CD8-positive, alpha-beta T cell (primary cell): ENCODE measurements at regions of chr9 and their contacts with region 1.

Region 1: GRCh38 chr9:112717661-112718341 is at the start of gene INIP:
- DNase-seq: peak; percentile 94 to 99 (median 97)
- ATAC-seq: peak; percentile 90
- H3K4me3 ChIP-seq: peak within 1 kb of the TSS; percentile 83 to 97
- H3K4me3 Mint-ChIP-seq: peak within 1 kb of the TSS; percentile 94
- H3K27ac ChIP-seq: peak within 1 kb of the TSS; percentile 95 to 96
- H3K27ac Mint-ChIP-seq: peak within 1 kb of the TSS; percentile 98
- H3K4me1 ChIP-seq: peaks cover 15% of the 10 kb centered on the region
- H3K4me1 Mint-ChIP-seq: peaks cover 30% of the 10 kb centered on the region
- H3K27me3 ChIP-seq: no peaks in the 10 kb centered on the region
- H3K27me3 Mint-ChIP-seq: no peaks in the 10 kb centered on the region
- CTCF ChIP-seq: no peak
- total RNA-seq, gene INIP: 11.7 to 17.2 TPM

Region 2: GRCh38 chr9:111483862-111484571 is 1233.8 kb before region 1 on chr9 and contains the start of gene ECPAS:
- CTCF ChIA-PET with region 1: no interaction called
- POLR2A ChIA-PET with region 1: no interaction called
- intact Hi-C with region 1: loop called (anchors 2 to 5 kb)
- DNase-seq: peak; percentile 35 to 79 (median 63)
- ATAC-seq: peak; percentile 64
- H3K4me3 ChIP-seq: peak within 1 kb of the TSS; percentile 90 to 99
- H3K4me3 Mint-ChIP-seq: peak within 1 kb of the TSS; percentile 86
- H3K27ac ChIP-seq: peak within 1 kb of the TSS; percentile 81 to 85
- H3K27ac Mint-ChIP-seq: peak within 1 kb of the TSS; percentile 81
- H3K4me1 ChIP-seq: peaks cover 7% of the 10 kb centered on the region
- H3K4me1 Mint-ChIP-seq: peaks cover 29% of the 10 kb centered on the region
- H3K27me3 ChIP-seq: no peaks in the 10 kb centered on the region
- H3K27me3 Mint-ChIP-seq: no peaks in the 10 kb centered on the region
- CTCF ChIP-seq: no peak
- total RNA-seq, gene ECPAS: 36.4 to 44.6 TPM

Region 3: GRCh38 chr9:112097712-112098688 is 619.8 kb before region 1 on chr9:
- CTCF ChIA-PET with region 1: no interaction called
- POLR2A ChIA-PET with region 1: no interaction called
- intact Hi-C with region 1: loop called (anchors 5 to 10 kb)
- DNase-seq: peak; percentile 41 to 84 (median 65)
- ATAC-seq: peak; percentile 78
- H3K4me3 ChIP-seq: no peak overlapping the region
- H3K4me3 Mint-ChIP-seq: no peak overlapping the region
- H3K27ac ChIP-seq: no peak overlapping the region
- H3K27ac Mint-ChIP-seq: no peak overlapping the region
- H3K4me1 ChIP-seq: peaks cover 4% of the 10 kb centered on the region
- H3K4me1 Mint-ChIP-seq: peaks cover 20% of the 10 kb centered on the region
- H3K27me3 ChIP-seq: no peaks in the 10 kb centered on the region
- H3K27me3 Mint-ChIP-seq: no peaks in the 10 kb centered on the region
- CTCF ChIP-seq: peak; percentile 89

Region 4: DNA sequence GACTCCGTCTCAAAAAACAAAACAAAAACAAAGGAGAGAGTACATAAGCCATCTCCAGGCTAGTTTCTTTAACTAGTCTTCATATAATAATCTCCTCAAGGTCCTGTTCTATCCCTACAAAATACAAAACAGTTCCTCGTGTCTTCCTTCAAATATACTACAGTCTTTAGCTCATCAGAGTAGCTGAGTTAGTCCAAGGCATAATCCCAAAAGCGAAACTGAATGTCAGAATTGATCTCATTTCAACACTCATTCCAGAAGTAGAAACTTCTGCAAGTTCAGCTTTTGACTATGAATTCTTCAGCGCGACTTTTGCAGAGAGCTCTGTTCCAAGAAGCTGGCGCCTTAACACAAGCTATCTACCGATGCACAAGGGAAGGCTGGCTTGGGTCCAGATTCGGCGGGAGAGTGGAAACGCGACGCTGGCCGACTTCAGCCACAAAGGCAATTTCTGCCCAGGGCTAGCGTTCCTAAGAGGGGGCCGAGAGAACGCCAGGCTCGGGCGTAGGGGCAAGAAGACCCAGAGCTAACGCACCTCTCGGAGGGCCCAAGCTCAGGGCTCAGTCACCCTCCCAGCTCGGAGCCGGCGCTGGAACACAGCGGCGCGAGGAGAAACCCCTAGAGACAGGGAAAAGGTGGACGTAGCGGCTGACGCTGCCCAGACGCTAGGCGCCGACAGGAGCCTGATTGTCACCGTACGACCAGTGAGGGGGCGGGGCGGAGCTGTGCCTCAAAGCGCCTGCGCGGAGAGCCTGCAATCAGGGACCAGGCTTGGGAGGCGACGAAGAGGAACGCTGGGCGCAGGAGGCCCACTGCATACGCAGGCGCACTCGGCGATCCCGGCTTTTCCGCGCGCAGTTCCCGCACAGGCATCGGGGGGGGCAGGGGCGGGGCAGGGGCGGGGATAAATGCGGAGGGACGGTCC is 338.4 kb before region 1 on chr9:
- CTCF ChIA-PET with region 1: interaction called, 9 read pairs
- POLR2A ChIA-PET with region 1: interaction called, 4 read pairs
- intact Hi-C with region 1: loop called (anchors 1 to 5 kb)
- DNase-seq: peak; percentile 93 to 99 (median 97)
- ATAC-seq: peak; percentile 95
- H3K4me3 ChIP-seq: peak overlapping the region; percentile 81 to 96
- H3K4me3 Mint-ChIP-seq: peak overlapping the region; percentile 99
- H3K27ac ChIP-seq: peak overlapping the region; percentile 77 to 92
- H3K27ac Mint-ChIP-seq: peak overlapping the region; percentile 96
- H3K4me1 ChIP-seq: peaks cover 27% of the 10 kb centered on the region
- H3K4me1 Mint-ChIP-seq: peaks cover 54% of the 10 kb centered on the region
- H3K27me3 ChIP-seq: no peaks in the 10 kb centered on the region
- H3K27me3 Mint-ChIP-seq: no peaks in the 10 kb centered on the region
- CTCF ChIP-seq: no peak

Region 5: DNA sequence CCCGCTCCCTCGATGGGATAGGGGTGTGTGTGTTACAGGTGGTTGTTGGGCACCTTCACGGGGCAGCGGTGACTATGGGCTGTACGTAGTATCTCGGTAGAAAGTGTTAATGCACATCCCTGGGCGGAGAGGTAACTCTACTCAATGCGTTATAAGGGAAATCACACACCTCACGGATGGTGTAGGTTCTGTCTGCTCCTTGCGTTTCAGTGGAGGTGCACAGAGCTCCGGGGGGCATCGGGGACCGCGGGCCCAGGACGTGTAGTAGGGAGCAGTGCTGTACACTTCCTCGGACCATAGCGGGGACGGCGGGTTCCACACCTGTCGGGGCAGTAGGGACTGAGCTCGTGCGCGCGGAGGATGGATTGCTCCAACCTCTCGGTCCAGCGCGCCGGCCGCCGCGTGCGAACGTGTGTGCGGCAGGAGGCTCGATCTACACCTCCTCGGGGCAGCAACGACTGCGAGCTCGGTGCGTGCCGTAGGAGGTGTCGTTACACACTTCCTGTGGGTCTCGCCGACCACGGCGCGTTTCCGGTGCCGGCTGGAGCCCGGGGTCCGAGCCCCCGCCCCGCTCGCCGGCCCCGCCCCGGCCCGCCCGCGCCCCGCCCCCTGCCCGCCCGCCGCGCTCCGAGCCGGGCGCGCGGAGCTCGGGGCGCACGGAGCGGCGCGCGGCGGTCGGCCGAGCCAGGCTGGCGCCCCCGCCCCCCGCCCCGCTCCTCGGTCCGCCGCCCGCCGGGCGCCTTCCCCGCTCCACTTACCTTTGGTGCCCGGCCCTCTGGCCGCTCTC is 231.4 kb before region 1 on chr9 and contains the start of gene KIAA1958:
- CTCF ChIA-PET with region 1: no interaction called
- POLR2A ChIA-PET with region 1: interaction called, 9 read pairs
- intact Hi-C with region 1: loop called (anchors 1 to 2 kb)
- DNase-seq: peak; percentile 50 to 91 (median 81)
- ATAC-seq: peak; percentile 74
- H3K4me3 ChIP-seq: peak within 1 kb of the TSS; percentile 77 to 81
- H3K4me3 Mint-ChIP-seq: peak within 1 kb of the TSS; percentile 97
- H3K27ac ChIP-seq: peak within 1 kb of the TSS; percentile 77 to 78
- H3K27ac Mint-ChIP-seq: peak within 1 kb of the TSS; percentile 94
- H3K4me1 ChIP-seq: peaks cover 12% of the 10 kb centered on the region
- H3K4me1 Mint-ChIP-seq: peaks cover 42% of the 10 kb centered on the region
- H3K27me3 ChIP-seq: no peaks in the 10 kb centered on the region
- H3K27me3 Mint-ChIP-seq: no peaks in the 10 kb centered on the region
- CTCF ChIP-seq: no peak
- total RNA-seq, gene KIAA1958: 7.2 to 7.5 TPM

Region 6: DNA sequence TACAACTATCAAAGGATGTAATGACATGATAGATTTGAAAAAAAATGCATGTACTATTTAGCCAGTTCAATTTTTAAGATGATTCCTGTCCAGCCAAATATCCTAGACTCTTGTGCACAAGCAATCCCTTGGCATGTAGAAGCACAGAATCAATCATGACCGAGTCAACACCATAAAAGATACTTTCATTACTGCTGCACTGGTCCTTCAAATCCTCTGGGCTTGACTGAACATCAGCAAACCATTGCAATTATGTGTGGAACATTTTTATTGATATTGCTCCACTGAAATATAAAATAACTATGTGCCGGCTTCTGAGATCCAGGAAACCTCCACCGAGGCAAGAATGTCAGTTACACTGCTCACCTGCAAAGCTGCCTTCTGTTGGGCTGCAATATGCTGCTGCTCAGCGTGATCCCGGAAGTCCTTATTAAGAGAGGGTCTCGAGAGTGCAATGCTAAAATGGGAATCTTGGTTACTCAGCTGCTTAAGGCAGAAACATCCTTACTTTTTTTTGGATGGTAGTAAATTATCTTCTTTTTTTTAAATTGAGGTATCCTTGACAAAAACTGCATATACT is 28.6 kb before region 1 on chr9:
- CTCF ChIA-PET with region 1: no interaction called
- POLR2A ChIA-PET with region 1: no interaction called
- intact Hi-C with region 1: no loop called
- DNase-seq: no peak
- ATAC-seq: no peak
- H3K4me3 ChIP-seq: no peak overlapping the region
- H3K4me3 Mint-ChIP-seq: no peak overlapping the region
- H3K27ac ChIP-seq: no peak overlapping the region
- H3K27ac Mint-ChIP-seq: no peak overlapping the region
- H3K4me1 ChIP-seq: no peaks in the 10 kb centered on the region
- H3K4me1 Mint-ChIP-seq: no peaks in the 10 kb centered on the region
- H3K27me3 ChIP-seq: no peaks in the 10 kb centered on the region
- H3K27me3 Mint-ChIP-seq: no peaks in the 10 kb centered on the region
- CTCF ChIP-seq: no peak

Region 7: DNA sequence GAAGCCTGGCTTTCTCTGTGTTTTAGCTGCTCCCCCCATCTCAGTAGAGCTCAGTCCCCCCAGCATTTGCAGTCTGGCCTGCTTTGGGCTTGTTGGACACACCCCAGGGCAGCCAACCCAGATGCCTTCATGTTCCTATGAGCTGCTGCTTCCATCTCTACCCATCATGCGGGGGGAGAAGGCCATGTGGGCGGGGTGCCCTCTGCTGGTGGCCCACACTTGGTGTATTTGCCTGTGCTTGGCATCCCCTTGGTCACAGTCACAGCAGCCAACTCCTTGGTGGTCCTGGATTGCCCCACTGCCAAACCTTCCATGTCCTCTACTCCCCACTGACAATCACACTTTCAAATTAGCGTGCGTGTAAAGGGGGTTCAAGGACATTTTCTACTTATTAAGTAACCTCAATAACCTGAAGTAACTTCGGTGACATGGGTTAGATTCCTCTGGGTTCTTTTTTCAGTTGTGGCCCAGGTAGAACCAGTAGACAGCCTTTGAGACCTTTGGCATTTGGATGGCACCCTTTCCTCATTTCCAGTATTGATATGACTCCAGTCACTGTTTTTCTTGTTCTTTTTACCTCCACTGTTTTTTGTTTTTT is 75.5 kb after region 1 on chr9:
- CTCF ChIA-PET with region 1: interaction called, 16 read pairs
- POLR2A ChIA-PET with region 1: interaction called, 5 read pairs
- intact Hi-C with region 1: loop called (anchors 1 to 5 kb)
- DNase-seq: peak; percentile 69 to 91 (median 84)
- ATAC-seq: peak; percentile 98
- H3K4me3 ChIP-seq: no peak overlapping the region
- H3K4me3 Mint-ChIP-seq: no peak overlapping the region
- H3K27ac ChIP-seq: no peak overlapping the region
- H3K27ac Mint-ChIP-seq: peak overlapping the region; percentile 38
- H3K4me1 ChIP-seq: no peaks in the 10 kb centered on the region
- H3K4me1 Mint-ChIP-seq: peaks cover 11% of the 10 kb centered on the region
- H3K27me3 ChIP-seq: no peaks in the 10 kb centered on the region
- H3K27me3 Mint-ChIP-seq: no peaks in the 10 kb centered on the region
- CTCF ChIP-seq: peak; percentile 65

Region 8: GRCh38 chr9:113261917-113262671 is 544.3 kb after region 1 on chr9:
- CTCF ChIA-PET with region 1: no interaction called
- POLR2A ChIA-PET with region 1: no interaction called
- intact Hi-C with region 1: no loop called
- DNase-seq: no peak
- ATAC-seq: no peak
- H3K4me3 ChIP-seq: no peak overlapping the region
- H3K4me3 Mint-ChIP-seq: no peak overlapping the region
- H3K27ac ChIP-seq: no peak overlapping the region
- H3K27ac Mint-ChIP-seq: no peak overlapping the region
- H3K4me1 ChIP-seq: no peaks in the 10 kb centered on the region
- H3K4me1 Mint-ChIP-seq: no peaks in the 10 kb centered on the region
- H3K27me3 ChIP-seq: no peaks in the 10 kb centered on the region
- H3K27me3 Mint-ChIP-seq: no peaks in the 10 kb centered on the region
- CTCF ChIP-seq: no peak

Region 9: DNA sequence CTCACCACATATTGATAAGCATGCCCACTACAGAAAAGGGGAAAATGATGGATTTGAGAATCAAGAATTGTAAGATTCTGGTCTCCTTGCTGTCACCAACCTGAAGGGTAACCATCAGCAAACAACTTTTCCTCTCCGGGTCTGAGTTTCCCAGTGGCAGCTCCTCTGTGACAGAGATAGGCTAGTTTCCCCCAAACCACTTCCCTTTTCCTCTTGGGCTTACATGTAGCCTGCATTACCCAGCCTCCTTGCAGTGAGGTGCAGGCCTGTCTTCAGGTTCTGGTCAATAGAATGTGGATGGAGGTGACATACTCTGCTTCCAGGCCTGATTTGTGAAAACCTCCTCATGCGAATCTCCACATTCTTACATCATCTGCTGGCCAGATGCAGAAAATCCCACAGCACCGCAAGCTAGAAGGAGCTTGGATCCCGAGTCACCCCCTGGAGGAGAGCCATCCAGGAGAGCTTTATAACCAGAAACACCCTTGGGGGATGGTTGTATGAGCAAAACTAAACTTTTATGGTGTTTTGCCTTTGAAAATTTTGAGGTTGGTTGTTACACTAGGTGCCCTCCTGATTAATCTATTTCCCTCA is 951.8 kb after region 1 on chr9:
- CTCF ChIA-PET with region 1: no interaction called
- POLR2A ChIA-PET with region 1: no interaction called
- intact Hi-C with region 1: no loop called
- DNase-seq: no peak
- ATAC-seq: no peak
- H3K4me3 ChIP-seq: no peak overlapping the region
- H3K4me3 Mint-ChIP-seq: no peak overlapping the region
- H3K27ac ChIP-seq: no peak overlapping the region
- H3K27ac Mint-ChIP-seq: no peak overlapping the region
- H3K4me1 ChIP-seq: no peaks in the 10 kb centered on the region
- H3K4me1 Mint-ChIP-seq: no peaks in the 10 kb centered on the region
- H3K27me3 ChIP-seq: no peaks in the 10 kb centered on the region
- H3K27me3 Mint-ChIP-seq: peaks cover 2% of the 10 kb centered on the region
- CTCF ChIP-seq: no peak